Stomach (tissue), 19 donors: ENCODE measurements at regions of chr5 and their contacts with region 1.

Region 1: GRCh38 chr5:44774279-44774880 is 34.4 kb upstream of the MRPS30 start:
- DNase-seq: peak in 1 of 2 donors; percentile 78
- H3K4me3 ChIP-seq: no peak overlapping the region
- H3K27ac ChIP-seq: no peak overlapping the region
- H3K4me1 ChIP-seq: no peaks in the 10 kb centered on the region
- H3K27me3 ChIP-seq: no peaks in the 10 kb centered on the region
- CTCF ChIP-seq: peak in 4 of 7 experiments; percentile 17 to 50 (median 41)
- EP300 ChIP-seq: no peak
- POLR2A ChIP-seq: no peak

Region 2: GRCh38 chr5:44536650-44537260 is 237.6 kb before region 1 on chr5:
- intact Hi-C with region 1: loop called (anchors 10 kb)
- DNase-seq: peak; percentile 30 to 57
- H3K4me3 ChIP-seq: no peak overlapping the region
- H3K27ac ChIP-seq: no peak overlapping the region
- H3K4me1 ChIP-seq: no peaks in the 10 kb centered on the region
- H3K27me3 ChIP-seq: no peaks in the 10 kb centered on the region
- CTCF ChIP-seq: peak in 3 of 7 experiments; percentile 37 to 56 (median 43)
- EP300 ChIP-seq: no peak
- POLR2A ChIP-seq: no peak

Region 3: DNA sequence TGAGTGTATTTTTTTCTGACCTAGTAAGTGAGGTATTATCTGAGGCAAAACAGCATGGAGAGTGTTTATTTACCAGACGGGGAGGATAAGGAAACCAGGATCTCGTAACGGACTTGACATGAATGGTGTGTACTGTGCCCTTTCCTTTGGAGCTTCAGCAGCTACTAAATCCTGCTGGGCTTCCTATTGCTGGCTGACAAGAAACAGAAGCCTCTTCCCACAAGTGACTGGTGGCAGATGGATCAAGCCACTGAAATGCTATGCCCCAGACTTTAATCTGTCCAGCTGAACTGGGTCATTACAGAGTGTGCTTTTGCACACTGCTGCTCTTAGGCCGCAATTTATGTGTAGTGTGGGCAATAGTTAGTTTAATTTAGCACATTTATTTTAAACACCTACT is 128.4 kb before region 1 on chr5:
- intact Hi-C with region 1: no loop called
- DNase-seq: peak in 1 of 2 donors; percentile 47
- H3K4me3 ChIP-seq: no peak overlapping the region
- H3K27ac ChIP-seq: no peak overlapping the region
- H3K4me1 ChIP-seq: peaks cover 0 to 7% (median 0%) of the 10 kb centered on the region in 4 donors
- H3K27me3 ChIP-seq: no peaks in the 10 kb centered on the region
- CTCF ChIP-seq: no peak
- EP300 ChIP-seq: no peak
- POLR2A ChIP-seq: no peak

Region 4: GRCh38 chr5:45737153-45737552 is 962.8 kb after region 1 on chr5:
- intact Hi-C with region 1: no loop called
- DNase-seq: no peak
- H3K4me3 ChIP-seq: no peak overlapping the region
- H3K27ac ChIP-seq: no peak overlapping the region
- H3K4me1 ChIP-seq: no peaks in the 10 kb centered on the region
- H3K27me3 ChIP-seq: no peaks in the 10 kb centered on the region
- CTCF ChIP-seq: no peak
- EP300 ChIP-seq: no peak
- POLR2A ChIP-seq: no peak